CD4-positive, alpha-beta memory T cell (primary cell): ENCODE measurements at regions of chr2 and their contacts with region 1.

Region 1: DNA sequence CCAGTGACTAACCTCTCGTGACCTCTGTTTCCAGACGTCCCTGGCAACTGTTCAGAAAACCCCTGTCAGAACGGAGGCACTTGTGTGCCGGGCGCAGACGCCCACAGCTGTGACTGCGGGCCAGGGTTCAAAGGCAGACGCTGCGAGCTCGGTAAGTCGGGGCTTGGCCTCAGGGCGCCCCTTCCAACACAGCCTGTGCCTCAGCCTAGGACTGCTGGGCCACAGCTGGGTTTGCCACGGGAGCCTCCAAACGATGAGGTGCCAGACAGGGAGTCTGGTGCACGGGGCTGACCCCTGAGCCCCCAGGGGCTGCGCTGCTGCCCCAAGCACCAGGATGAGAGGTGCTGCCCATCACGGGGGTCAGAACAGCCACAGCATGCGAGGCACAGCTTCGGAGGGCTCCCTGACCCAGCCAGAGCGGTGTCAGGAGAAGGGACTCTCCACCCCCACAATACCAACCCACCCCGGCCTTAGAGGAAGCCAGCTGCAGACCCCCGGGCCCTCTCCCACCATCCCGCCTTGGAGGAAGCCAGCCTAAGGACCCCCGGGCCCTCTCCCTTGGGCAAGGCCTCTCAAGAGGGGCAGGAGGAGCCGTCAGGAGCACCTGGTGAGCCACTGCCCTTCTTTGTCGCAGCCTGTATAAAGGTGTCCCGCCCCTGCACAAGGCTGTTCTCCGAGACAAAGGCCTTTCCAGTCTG is 20.3 kb downstream of the MTERF4 start:
- DNase-seq: no peak
- H3K4me3 ChIP-seq: no peak overlapping the region
- H3K4me3 Mint-ChIP-seq: peak overlapping the region in 1 of 8 donors; percentile 6
- H3K27ac ChIP-seq: no peak overlapping the region
- H3K27ac Mint-ChIP-seq: peak overlapping the region in 5 of 7 donors; percentile 19 to 89 (median 68)
- H3K4me1 ChIP-seq: no peaks in the 10 kb centered on the region
- H3K4me1 Mint-ChIP-seq: peaks cover 21 to 33% (median 23%) of the 10 kb centered on the region in 4 donors
- H3K27me3 ChIP-seq: no peaks in the 10 kb centered on the region
- H3K27me3 Mint-ChIP-seq: no peaks in the 10 kb centered on the region

Region 2: GRCh38 chr2:240640939-240641338 is 440.9 kb before region 1 on chr2:
- CTCF ChIA-PET with region 1: no interaction called
- POLR2A ChIA-PET with region 1: no interaction called
- intact Hi-C with region 1: no loop called
- DNase-seq: no peak
- H3K4me3 ChIP-seq: no peak overlapping the region
- H3K4me3 Mint-ChIP-seq: no peak overlapping the region
- H3K27ac ChIP-seq: no peak overlapping the region
- H3K27ac Mint-ChIP-seq: peak overlapping the region in 2 of 7 donors; percentile 57 to 61
- H3K4me1 ChIP-seq: peaks cover 6% of the 10 kb centered on the region
- H3K4me1 Mint-ChIP-seq: peaks cover under 1 to 5% (median 4%) of the 10 kb centered on the region in 4 donors
- H3K27me3 ChIP-seq: no peaks in the 10 kb centered on the region
- H3K27me3 Mint-ChIP-seq: no peaks in the 10 kb centered on the region

Region 3: DNA sequence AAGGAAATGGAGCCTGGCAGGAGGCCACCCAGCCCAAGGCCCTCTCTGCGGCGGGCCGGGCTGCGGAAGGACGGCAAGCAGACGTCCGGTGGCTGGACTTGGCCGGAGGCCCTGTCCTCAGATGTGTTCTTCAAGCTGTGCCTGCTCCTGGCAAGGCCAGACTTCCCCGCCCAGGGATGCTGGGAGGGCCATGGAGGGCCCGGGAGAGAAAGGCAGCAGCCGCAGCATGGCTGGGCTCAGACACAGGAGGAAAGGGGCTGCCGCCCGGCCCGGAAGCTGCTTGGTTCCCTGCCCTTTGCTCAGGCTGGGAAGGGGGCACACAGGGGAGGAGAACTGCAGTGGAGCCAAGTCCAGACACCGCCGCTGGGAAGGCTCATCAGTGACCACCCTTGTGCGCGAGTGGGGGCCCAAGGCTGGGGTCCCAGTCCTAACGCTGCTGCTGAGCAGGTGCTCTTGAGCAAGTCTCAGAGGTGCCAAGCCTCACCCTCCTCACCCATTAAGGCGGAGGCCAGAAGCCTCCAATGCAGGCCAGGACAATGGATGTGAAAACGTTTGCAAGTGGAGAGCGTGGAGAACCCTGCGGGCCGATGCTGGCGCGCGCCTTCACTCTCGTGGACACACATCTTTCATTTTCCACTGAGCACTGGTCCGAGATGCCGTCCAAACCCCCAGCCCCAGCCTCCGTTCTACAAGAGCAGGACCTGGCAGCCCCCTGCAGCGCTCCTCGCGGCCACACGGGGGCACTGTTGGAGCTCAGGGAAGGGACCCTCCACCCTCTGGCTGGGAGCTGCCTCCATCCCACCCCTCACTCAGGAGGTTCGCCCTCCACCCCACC is 167.8 kb before region 1 on chr2:
- CTCF ChIA-PET with region 1: interaction called, 3 read pairs
- POLR2A ChIA-PET with region 1: no interaction called
- intact Hi-C with region 1: loop called (anchors 2 kb)
- DNase-seq: peak in 4 of 5 donors; percentile 44 to 56 (median 50)
- H3K4me3 ChIP-seq: no peak overlapping the region
- H3K4me3 Mint-ChIP-seq: no peak overlapping the region
- H3K27ac ChIP-seq: no peak overlapping the region
- H3K27ac Mint-ChIP-seq: no peak overlapping the region
- H3K4me1 ChIP-seq: no peaks in the 10 kb centered on the region
- H3K4me1 Mint-ChIP-seq: no peaks in the 10 kb centered on the region
- H3K27me3 ChIP-seq: no peaks in the 10 kb centered on the region
- H3K27me3 Mint-ChIP-seq: peaks cover 19 to 20% of the 10 kb centered on the region in 2 donors

Region 4: GRCh38 chr2:241096979-241097378 is 15.2 kb after region 1 on chr2:
- CTCF ChIA-PET with region 1: interaction called, 9 read pairs
- POLR2A ChIA-PET with region 1: interaction called, 31 read pairs
- intact Hi-C with region 1: loop called (anchors 1 kb)
- DNase-seq: no peak
- H3K4me3 ChIP-seq: no peak overlapping the region
- H3K4me3 Mint-ChIP-seq: peak overlapping the region in 4 of 8 donors; percentile 10 to 73 (median 44)
- H3K27ac ChIP-seq: peak overlapping the region; percentile 55
- H3K27ac Mint-ChIP-seq: peak overlapping the region; percentile 74 to 99 (median 97)
- H3K4me1 ChIP-seq: peaks cover 78% of the 10 kb centered on the region
- H3K4me1 Mint-ChIP-seq: peaks cover 40 to 81% (median 59%) of the 10 kb centered on the region in 4 donors
- H3K27me3 ChIP-seq: no peaks in the 10 kb centered on the region
- H3K27me3 Mint-ChIP-seq: no peaks in the 10 kb centered on the region

Region 5: DNA sequence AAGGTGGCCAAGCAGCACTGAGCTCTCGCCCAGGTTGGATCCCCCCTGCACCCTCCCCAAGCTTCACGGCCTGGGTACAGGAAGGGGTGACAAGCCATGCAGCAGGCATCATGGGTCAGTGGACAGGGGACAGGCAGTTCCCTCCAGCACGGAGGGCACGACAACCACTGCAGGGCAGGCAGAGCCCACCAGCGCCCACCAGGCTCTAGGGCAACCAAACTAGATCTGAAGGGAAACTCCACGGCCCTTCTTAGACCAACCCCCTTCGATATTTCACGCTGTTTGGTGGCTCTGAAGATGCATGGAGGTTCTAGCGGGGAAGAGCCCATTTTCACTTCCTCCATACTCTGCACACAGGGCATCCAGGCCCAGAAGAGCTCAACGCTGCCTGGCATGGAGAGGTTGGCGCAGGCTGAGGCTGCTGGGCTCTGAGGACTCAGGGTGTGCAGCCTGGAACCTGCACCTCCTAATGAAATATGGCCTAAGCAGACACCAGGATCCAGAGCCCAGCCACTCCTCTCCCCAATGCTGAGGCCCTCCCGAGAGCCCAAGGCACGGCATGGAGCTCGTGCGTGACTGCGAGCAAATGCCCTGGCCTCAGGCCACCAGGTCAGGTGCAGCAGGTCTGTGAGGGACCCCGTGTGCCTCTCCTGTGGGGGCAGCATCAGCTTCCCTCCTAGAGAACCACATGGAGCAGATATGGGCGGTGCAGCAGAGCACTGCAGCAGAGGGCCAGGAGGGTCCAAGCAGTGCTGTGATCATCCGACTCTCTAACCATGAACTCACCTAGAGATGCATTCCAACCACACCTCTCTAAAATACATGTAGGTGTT is 29.0 kb after region 1 on chr2:
- CTCF ChIA-PET with region 1: interaction called, 5 read pairs
- POLR2A ChIA-PET with region 1: interaction called, 11 read pairs
- intact Hi-C with region 1: no loop called
- DNase-seq: peak in 1 of 5 donors; percentile 33
- H3K4me3 ChIP-seq: peak overlapping the region; percentile 48 to 51
- H3K4me3 Mint-ChIP-seq: peak overlapping the region; percentile 89 to 98 (median 93)
- H3K27ac ChIP-seq: peak overlapping the region; percentile 64
- H3K27ac Mint-ChIP-seq: peak overlapping the region; percentile 93 to 99 (median 97)
- H3K4me1 ChIP-seq: peaks cover 60% of the 10 kb centered on the region
- H3K4me1 Mint-ChIP-seq: peaks cover 35 to 69% (median 53%) of the 10 kb centered on the region in 4 donors
- H3K27me3 ChIP-seq: no peaks in the 10 kb centered on the region
- H3K27me3 Mint-ChIP-seq: no peaks in the 10 kb centered on the region

Region 6: GRCh38 chr2:241217320-241218031 is 135.7 kb after region 1 on chr2:
- CTCF ChIA-PET with region 1: no interaction called
- POLR2A ChIA-PET with region 1: no interaction called
- intact Hi-C with region 1: loop called (anchors 2 kb)
- DNase-seq: peak in 4 of 5 donors; percentile 25 to 40 (median 36)
- H3K4me3 ChIP-seq: peak overlapping the region in 1 of 2 donors; percentile 32
- H3K4me3 Mint-ChIP-seq: peak overlapping the region; percentile 66 to 87 (median 78)
- H3K27ac ChIP-seq: peak overlapping the region; percentile 35
- H3K27ac Mint-ChIP-seq: peak overlapping the region in 6 of 7 donors; percentile 35 to 75 (median 62)
- H3K4me1 ChIP-seq: peaks cover 10% of the 10 kb centered on the region
- H3K4me1 Mint-ChIP-seq: peaks cover 10 to 17% (median 10%) of the 10 kb centered on the region in 4 donors
- H3K27me3 ChIP-seq: no peaks in the 10 kb centered on the region
- H3K27me3 Mint-ChIP-seq: no peaks in the 10 kb centered on the region